ENCODE measurements at regions of chr17 and their contacts with region 1.

Region 1: GRCh38 chr17:59254737-59255136 is 34.4 kb downstream of the GDPD1 start:
- DNase-seq: peak; percentile 4 to 70
- H3K4me3 ChIP-seq: no peak overlapping the region
- H3K27ac ChIP-seq: no peak overlapping the region
- H3K4me1 ChIP-seq: peaks cover 26% of the 10 kb centered on the region
- H3K27me3 ChIP-seq: no peaks in the 10 kb centered on the region
- CTCF ChIP-seq: no peak

Region 2: GRCh38 chr17:59406808-59407429 is 152.2 kb after region 1 on chr17:
- CTCF ChIA-PET with region 1: no interaction called
- POLR2A ChIA-PET with region 1: no interaction called
- intact Hi-C with region 1: no loop called
- DNase-seq: peak; percentile 56 to 88
- H3K4me3 ChIP-seq: no peak overlapping the region
- H3K27ac ChIP-seq: no peak overlapping the region
- H3K4me1 ChIP-seq: peaks cover 19% of the 10 kb centered on the region
- H3K27me3 ChIP-seq: no peaks in the 10 kb centered on the region
- CTCF ChIP-seq: no peak

Region 3: DNA sequence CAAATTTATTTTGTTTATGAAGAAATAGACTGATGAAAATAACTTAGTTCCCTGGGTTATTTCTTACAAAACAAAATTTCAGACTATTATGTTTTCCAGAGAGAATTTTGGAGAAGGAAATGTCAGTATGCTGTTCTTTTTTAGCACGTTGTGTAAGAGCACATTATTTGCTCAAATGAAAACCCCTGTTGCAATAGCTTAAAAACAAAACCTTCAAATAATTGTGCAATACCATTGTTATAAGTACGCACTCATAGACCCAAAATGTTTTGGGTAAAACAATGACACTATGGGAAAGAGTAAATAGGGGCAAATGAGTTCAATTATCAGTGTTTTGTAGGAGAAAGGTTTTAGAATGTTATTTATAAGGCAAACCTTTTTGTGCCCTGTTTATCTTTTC is 471.0 kb after region 1 on chr17:
- CTCF ChIA-PET with region 1: interaction called, 14 read pairs
- POLR2A ChIA-PET with region 1: interaction called, 3 read pairs
- intact Hi-C with region 1: no loop called
- DNase-seq: peak in 1 of 2 experiments; percentile 49
- H3K4me3 ChIP-seq: no peak overlapping the region
- H3K27ac ChIP-seq: peak overlapping the region; percentile 36
- H3K4me1 ChIP-seq: peaks cover 20% of the 10 kb centered on the region
- H3K27me3 ChIP-seq: no peaks in the 10 kb centered on the region
- CTCF ChIP-seq: no peak